Activated CD4-positive, alpha-beta T cell treated with anti-CD3 and anti-CD28 coated beads for 36 hours (primary cell): ENCODE measurements at regions of chr3 and their contacts with region 1.

Region 1: DNA sequence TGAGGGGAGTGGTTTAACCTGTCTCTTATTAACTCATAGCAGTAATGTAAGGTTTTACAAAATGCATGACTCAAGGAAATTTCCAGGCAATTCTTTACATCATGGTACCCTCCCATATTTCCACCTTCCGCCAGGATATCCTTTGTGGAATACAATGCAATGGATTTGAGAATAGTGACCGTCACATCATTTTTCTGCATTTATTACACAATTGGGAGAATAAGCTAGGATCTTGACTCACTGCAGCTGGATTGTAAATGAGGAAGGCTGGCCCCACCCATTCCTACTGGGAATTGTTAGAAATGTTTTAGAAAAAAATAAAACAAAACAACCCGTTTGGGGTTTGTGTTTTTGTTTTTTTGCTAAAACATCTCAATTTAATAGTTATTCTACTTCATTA is 97.4 kb downstream of the IMPG2 start:
- DNase-seq: no peak
- ATAC-seq: no peak
- H3K4me3 Mint-ChIP-seq: no peak overlapping the region
- H3K27ac Mint-ChIP-seq: no peak overlapping the region
- H3K4me1 Mint-ChIP-seq: peaks cover 16% of the 10 kb centered on the region
- H3K27me3 Mint-ChIP-seq: no peaks in the 10 kb centered on the region

Region 2: DNA sequence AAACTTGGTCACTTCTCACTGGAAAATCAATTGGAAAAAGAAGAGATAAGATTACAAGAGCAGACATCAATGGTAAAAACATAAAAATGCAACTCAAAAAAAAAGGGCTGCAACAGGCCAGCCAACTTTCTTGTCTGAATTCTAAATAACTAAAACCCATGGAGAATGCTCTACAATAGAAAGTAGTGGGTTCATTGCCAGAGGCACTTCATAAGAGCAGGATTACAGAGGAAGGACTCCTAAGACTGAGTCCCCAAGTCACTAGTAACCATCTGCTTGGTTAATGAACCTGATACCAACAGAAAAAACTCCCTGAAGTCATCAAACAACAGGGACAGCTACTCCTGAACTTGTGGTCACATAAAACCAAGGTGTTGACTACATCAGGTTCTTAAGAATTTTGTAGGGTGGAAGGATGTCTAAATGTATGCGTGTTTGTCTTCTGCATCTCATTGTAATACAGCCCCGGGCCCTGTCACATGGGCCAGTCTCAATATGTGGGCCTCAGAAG is 51.3 kb before region 1 on chr3:
- CTCF ChIA-PET with region 1: no interaction called
- POLR2A ChIA-PET with region 1: no interaction called
- intact Hi-C with region 1: loop called (anchors 1 kb)
- DNase-seq: peak; percentile 35
- ATAC-seq: peak; percentile 82
- H3K4me3 Mint-ChIP-seq: no peak overlapping the region
- H3K27ac Mint-ChIP-seq: peak overlapping the region; percentile 68
- H3K4me1 Mint-ChIP-seq: peaks cover 19% of the 10 kb centered on the region
- H3K27me3 Mint-ChIP-seq: peaks cover 10% of the 10 kb centered on the region